Activated CD4-positive, alpha-beta memory T cell treated with anti-CD3 and anti-CD28 coated beads for 36 hours (primary cell): ENCODE measurements at regions of chr12 and their contacts with region 1.

Region 1: GRCh38 chr12:112409064-112409905 is at the start of gene RPL6:
- DNase-seq: peak; percentile 86
- H3K4me3 Mint-ChIP-seq: peak within 1 kb of the TSS; percentile 100
- H3K27ac Mint-ChIP-seq: peak within 1 kb of the TSS; percentile 100
- H3K4me1 Mint-ChIP-seq: peaks cover 37% of the 10 kb centered on the region
- H3K27me3 Mint-ChIP-seq: no peaks in the 10 kb centered on the region
- total RNA-seq, gene RPL6: 1,833 TPM

Region 2: DNA sequence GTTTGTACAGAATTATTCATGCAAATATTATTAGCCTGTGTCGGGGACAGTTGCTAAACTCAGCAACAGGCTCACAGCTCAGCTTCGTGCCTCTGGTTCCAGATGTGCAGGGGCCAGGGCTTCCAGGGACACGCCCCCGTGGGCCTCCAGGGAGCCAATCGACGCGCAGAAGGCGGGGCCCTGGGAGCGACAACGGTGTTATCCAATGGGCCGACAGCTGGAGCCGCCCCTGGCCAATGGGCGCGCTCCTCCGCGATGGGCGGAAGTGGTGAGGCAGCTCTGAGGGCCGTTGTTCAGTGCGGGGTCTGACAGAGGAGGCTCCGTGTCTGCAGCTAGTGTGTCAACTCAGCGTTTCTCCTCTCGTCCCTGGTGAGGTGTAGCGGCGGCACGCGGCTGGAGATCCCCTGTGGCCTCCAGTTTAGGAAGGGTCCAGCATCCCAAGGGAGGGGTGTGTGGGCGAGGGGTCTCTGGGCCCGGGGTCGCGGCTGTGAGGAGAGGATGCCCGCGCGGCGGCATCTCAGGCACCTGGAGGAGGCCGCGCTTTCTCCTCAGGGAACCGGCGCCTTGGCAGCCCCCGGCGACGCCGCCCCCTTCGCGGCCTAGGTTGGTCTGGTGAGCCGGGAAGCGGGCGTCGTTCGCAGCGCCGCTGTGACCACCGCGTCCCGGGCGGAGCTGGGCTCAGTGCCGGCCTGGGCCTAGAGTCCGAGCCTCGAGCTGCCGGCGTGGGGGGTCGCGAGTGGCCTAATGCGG is 283.9 kb before region 1 on chr12 and contains the start of gene TRAFD1:
- CTCF ChIA-PET with region 1: no interaction called
- POLR2A ChIA-PET with region 1: no interaction called
- intact Hi-C with region 1: loop called (anchors 5 kb)
- DNase-seq: peak; percentile 99
- H3K4me3 Mint-ChIP-seq: peak within 1 kb of the TSS; percentile 87
- H3K27ac Mint-ChIP-seq: peak within 1 kb of the TSS; percentile 87
- H3K4me1 Mint-ChIP-seq: peaks cover 36% of the 10 kb centered on the region
- H3K27me3 Mint-ChIP-seq: peaks cover 1% of the 10 kb centered on the region
- total RNA-seq, gene TRAFD1: 56.4 to 61.8 TPM

Region 3: GRCh38 chr12:112198120-112198733 is 211.1 kb before region 1 on chr12:
- CTCF ChIA-PET with region 1: interaction called, 11 read pairs
- POLR2A ChIA-PET with region 1: no interaction called
- intact Hi-C with region 1: loop called (anchors 2 kb)
- DNase-seq: peak; percentile 70
- H3K4me3 Mint-ChIP-seq: no peak overlapping the region
- H3K27ac Mint-ChIP-seq: no peak overlapping the region
- H3K4me1 Mint-ChIP-seq: no peaks in the 10 kb centered on the region
- H3K27me3 Mint-ChIP-seq: no peaks in the 10 kb centered on the region

Region 4: GRCh38 chr12:112393328-112393727 is 16.0 kb before region 1 on chr12:
- CTCF ChIA-PET with region 1: no interaction called
- POLR2A ChIA-PET with region 1: no interaction called
- intact Hi-C with region 1: no loop called
- DNase-seq: no peak
- H3K4me3 Mint-ChIP-seq: no peak overlapping the region
- H3K27ac Mint-ChIP-seq: no peak overlapping the region
- H3K4me1 Mint-ChIP-seq: no peaks in the 10 kb centered on the region
- H3K27me3 Mint-ChIP-seq: peaks cover 5% of the 10 kb centered on the region